Activated CD4-positive, alpha-beta memory T cell treated with anti-CD3 and anti-CD28 coated beads for 36 hours (primary cell): ENCODE measurements at regions of chr7 and their contacts with region 1.

Region 1: DNA sequence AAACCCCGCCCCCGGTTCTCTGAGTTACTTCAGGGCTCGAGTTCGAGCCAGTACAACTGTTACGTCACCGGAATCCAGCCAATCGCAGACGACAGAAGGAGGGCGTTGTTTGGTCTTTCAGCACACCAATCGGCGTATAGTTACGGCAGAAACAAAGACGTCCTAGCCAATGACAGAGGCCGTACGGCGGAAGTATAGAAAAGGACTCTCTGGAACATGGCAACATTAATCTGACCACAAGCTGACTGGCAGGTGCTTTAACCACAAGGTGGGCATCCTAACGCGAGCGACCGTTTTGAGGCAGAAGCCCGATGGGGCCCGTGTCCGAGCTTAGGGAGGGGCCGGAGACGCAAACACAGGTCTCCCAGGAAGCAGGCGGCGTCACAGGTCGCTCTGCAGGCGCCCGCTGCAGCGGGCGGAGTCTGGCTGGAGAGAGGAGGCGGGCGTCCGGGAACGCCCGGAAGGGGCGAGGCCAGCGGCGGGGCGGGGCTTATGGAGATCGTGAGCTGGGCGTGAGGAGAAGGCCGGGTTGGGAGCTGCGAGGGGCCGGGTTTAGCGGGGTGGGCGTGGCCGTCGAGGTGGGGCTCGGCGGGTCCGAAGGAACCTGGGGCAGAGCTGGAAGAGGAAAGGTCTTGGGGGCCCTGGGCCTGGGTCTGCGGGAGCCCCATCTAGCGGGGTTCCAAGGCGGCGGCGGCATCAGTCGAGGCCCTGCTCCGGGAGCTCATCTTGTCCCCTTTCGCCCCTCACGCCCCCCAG is at the start of gene MOSPD3:
- DNase-seq: peak; percentile 98
- H3K4me3 Mint-ChIP-seq: peak within 1 kb of the TSS; percentile 90
- H3K27ac Mint-ChIP-seq: peak within 1 kb of the TSS; percentile 98
- H3K4me1 Mint-ChIP-seq: peaks cover 14% of the 10 kb centered on the region
- H3K27me3 Mint-ChIP-seq: no peaks in the 10 kb centered on the region
- total RNA-seq, gene MOSPD3: 14.0 to 14.4 TPM

Region 2: DNA sequence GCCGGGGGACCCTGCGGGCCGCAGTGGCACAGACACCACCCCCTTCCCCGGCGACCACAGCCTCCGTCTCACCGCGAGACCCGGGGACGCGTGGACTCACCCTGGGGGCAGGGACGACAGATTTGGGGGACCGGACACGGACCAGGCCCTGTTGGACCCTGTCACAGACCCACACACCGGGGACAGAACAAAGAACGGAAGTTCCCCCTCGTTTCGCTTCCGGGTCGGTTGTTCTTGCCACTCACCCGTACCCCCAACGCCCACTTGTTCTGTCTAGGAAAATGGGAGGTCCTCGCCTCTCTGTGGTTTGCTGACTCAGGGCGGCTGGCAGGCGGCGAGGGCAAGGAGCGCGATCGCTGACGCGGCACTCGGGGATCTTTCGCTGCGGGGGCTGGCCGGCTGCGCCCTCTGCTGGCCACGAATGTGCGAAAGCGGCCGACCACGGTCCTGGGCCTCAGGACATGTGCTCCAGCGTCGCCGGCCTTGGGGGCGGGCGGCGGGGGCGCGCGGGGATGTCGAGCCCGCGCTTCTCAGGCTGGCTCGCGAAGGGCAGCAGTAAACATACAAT is 530.5 kb before region 1 on chr7 and contains the start of gene ZNF3:
- CTCF ChIA-PET with region 1: no interaction called
- POLR2A ChIA-PET with region 1: no interaction called
- intact Hi-C with region 1: no loop called
- DNase-seq: peak; percentile 99
- H3K4me3 Mint-ChIP-seq: peak within 1 kb of the TSS; percentile 83
- H3K27ac Mint-ChIP-seq: peak within 1 kb of the TSS; percentile 85
- H3K4me1 Mint-ChIP-seq: peaks cover 29% of the 10 kb centered on the region
- H3K27me3 Mint-ChIP-seq: no peaks in the 10 kb centered on the region
- total RNA-seq, gene ZNF3: 18.0 to 18.6 TPM

Region 3: DNA sequence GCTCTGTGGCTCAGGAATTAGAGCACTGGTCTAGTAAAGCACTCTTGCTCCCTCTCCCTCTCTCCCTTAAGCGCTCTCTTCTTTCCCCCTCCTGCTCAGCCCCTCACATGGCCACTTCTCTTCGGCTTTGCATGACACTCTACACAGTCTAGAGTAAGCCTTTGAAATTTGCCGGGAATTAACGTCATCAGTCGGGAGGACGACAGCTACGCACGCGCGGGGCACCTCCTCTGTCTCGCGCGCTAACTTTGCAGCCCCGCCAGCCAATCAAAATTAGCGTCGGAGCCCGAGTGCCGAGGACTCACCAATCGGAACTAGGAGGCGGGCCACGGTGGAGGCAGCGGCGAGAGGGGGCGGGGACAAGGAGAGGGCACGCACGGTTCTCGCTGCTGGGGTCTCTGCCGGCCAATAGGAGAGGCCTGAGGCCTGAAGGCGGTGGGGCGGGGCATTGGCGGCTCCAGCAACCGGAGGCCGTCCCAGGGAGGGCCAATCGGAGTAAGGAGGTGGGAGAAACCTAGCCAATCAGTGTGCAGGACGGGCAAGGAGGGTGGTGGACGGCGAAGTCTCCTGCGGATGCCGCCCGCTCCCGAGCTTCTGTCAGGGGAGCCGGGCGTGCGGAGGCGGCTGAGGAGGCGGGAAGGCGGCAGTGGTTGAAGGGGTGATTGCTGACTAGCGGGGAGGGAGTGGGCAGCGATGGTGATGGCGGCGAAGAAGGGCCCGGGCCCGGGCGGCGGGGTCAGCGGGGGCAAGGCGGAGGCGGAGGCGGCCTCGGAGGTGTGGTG is 73.3 kb before region 1 on chr7 and contains the start of gene AGFG2:
- CTCF ChIA-PET with region 1: no interaction called
- POLR2A ChIA-PET with region 1: no interaction called
- intact Hi-C with region 1: loop called (anchors 2 kb)
- DNase-seq: peak; percentile 100
- H3K4me3 Mint-ChIP-seq: peak within 1 kb of the TSS; percentile 95
- H3K27ac Mint-ChIP-seq: peak within 1 kb of the TSS; percentile 90
- H3K4me1 Mint-ChIP-seq: peaks cover 41% of the 10 kb centered on the region
- H3K27me3 Mint-ChIP-seq: no peaks in the 10 kb centered on the region
- total RNA-seq, gene AGFG2: 60.9 to 62.5 TPM

Region 4: DNA sequence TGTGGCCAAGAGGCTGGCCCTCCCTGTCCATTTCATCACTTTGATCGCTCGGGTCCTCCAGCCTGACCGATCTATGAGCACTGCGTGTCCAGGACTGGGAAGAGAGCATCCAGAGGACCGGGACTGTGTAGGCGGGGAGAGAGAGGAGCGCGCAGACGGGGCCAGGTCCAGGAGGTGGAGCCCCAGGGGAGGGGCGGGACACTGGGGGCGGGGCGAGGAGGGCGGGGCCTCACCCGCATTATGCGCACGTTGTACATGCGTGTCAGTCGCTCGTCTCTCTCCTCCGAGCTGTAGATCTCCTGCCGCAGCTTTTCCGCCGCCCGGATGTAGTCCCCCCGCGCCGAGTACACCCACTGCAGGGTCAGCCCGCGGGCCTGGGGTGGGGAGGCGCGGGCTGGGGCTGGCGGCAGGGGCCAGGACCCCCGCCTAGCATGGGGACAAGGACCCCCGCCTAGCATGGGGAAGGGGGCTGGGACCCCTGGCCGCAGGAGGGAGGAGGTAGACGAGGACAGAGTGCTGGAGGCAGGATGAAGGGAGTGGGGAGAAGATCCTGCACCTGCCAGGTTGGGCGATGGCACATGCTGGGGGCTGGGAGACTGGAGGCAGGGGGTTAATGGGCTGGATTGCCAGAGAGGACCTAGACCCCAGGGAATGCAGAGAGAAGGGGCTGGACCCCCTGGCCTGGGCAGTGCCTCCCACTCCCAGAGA is 14.5 kb after region 1 on chr7:
- CTCF ChIA-PET with region 1: interaction called, 11 read pairs
- POLR2A ChIA-PET with region 1: interaction called, 7 read pairs
- intact Hi-C with region 1: loop called (anchors 1 kb)
- DNase-seq: peak; percentile 96
- H3K4me3 Mint-ChIP-seq: peak overlapping the region; percentile 65
- H3K27ac Mint-ChIP-seq: peak overlapping the region; percentile 38
- H3K4me1 Mint-ChIP-seq: peaks cover 12% of the 10 kb centered on the region
- H3K27me3 Mint-ChIP-seq: no peaks in the 10 kb centered on the region

Region 5: DNA sequence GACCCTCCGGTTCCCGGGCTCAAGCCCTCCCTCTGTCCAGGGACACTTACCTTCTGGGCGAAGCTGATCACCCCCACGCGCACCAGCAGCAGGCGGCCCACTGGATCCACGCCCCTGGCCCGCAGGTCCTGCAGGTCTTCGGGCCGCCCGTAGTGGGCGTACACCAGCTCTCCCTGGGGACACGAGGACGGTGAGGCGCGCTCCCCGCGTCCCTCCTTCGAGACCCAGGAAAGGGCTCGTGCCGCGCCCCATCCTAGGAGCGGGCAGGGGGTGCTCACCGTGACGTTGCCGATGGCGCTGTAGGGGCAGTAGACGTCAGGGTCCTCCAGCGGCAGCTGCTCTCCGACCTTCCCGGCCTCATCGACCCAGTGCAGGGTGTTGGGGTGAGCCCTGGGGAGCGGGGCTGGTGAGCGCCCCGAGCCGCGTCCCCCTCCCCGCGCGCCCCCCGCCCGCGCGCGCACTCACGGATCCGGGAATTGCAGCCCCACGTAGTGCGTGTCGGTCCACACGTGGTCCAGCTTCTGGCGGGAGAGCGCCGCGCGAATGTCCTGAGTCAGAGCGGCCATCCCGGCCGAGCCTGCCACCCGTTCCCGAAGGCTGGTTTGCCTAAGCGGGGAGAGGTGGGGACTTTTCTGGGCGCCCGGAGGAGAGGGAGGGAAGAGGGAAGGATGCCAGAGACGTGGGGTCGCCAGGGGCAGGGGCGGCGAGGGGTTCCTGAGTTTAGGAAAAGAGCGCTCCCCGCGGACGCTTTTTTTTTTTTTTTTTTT is 21.0 kb after region 1 on chr7:
- CTCF ChIA-PET with region 1: interaction called, 33 read pairs
- POLR2A ChIA-PET with region 1: interaction called, 4 read pairs
- intact Hi-C with region 1: no loop called
- DNase-seq: peak; percentile 78
- H3K4me3 Mint-ChIP-seq: peak overlapping the region; percentile 77
- H3K27ac Mint-ChIP-seq: peak overlapping the region; percentile 82
- H3K4me1 Mint-ChIP-seq: peaks cover 12% of the 10 kb centered on the region
- H3K27me3 Mint-ChIP-seq: peaks cover 3% of the 10 kb centered on the region

Region 6: DNA sequence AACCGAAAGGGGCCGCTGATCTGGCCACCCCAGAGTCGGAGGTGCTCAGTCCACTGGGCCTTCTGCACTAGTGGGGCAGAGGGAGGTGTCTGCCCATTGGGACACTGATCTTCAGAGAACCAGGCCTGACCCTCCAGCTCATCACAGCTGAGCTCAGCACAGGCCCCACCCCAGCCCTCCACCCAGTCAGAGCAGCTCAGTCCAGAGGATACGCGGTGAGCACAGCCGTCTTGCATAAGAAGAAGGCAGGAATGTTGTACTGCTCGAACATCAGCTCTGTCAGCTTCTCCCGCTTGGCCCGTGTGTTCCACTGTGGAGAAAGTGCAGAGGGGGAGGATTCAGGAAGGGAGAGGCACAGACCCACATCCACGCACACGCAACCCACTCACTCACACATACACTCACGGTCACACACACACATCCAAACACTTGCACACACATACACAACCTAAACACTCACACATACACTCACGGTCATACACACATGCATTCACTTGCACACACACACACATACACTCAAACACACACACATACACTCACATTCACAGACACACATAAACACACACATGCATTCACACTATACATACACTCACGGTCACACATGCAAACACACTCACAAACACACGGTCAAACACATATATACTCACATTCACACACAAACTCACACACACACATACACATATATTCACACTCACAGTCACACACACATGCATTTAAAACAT is 37.8 kb after region 1 on chr7:
- CTCF ChIA-PET with region 1: no interaction called
- POLR2A ChIA-PET with region 1: no interaction called
- intact Hi-C with region 1: no loop called
- DNase-seq: no peak
- H3K4me3 Mint-ChIP-seq: no peak overlapping the region
- H3K27ac Mint-ChIP-seq: no peak overlapping the region
- H3K4me1 Mint-ChIP-seq: no peaks in the 10 kb centered on the region
- H3K27me3 Mint-ChIP-seq: peaks cover 22% of the 10 kb centered on the region

Region 7: DNA sequence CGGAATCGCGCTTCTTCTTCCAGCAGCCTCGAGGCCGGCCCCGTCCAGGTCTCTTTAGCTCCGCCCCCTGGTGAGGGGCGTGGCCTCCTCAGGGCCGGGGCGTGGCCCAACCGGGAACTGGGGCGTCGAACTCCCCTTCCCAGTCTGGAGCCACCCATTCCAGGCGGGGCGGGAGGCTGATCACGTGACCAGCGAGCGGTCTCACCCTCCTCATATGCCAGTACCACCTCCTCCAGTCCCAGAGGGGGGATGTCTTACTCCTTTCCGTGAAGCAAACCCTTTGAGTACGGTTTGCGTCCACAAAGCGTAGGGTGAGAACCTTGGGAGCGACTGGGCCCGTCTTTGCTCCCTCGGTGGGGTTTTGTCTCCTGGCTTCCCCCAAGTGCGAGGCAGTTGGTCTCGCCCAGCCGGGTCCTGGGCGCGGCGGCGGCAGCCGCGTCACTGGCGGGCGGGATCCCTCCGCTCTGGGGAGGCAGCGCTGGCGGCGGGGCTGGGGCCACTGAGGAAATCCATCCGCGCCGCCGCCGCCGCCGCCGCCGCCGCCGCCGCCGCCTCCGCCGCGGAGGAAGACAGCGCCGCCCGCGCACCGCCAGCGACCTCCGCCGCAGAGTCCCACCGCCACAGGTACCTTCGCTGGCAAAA is 61.3 kb after region 1 on chr7 and contains the start of gene GNB2:
- CTCF ChIA-PET with region 1: no interaction called
- POLR2A ChIA-PET with region 1: interaction called, 7 read pairs
- intact Hi-C with region 1: loop called (anchors 1 kb)
- DNase-seq: peak; percentile 100
- H3K4me3 Mint-ChIP-seq: peak within 1 kb of the TSS; percentile 95
- H3K27ac Mint-ChIP-seq: peak within 1 kb of the TSS; percentile 97
- H3K4me1 Mint-ChIP-seq: peaks cover 8% of the 10 kb centered on the region
- H3K27me3 Mint-ChIP-seq: no peaks in the 10 kb centered on the region
- total RNA-seq, gene GNB2: 228 to 231 TPM

Region 8: DNA sequence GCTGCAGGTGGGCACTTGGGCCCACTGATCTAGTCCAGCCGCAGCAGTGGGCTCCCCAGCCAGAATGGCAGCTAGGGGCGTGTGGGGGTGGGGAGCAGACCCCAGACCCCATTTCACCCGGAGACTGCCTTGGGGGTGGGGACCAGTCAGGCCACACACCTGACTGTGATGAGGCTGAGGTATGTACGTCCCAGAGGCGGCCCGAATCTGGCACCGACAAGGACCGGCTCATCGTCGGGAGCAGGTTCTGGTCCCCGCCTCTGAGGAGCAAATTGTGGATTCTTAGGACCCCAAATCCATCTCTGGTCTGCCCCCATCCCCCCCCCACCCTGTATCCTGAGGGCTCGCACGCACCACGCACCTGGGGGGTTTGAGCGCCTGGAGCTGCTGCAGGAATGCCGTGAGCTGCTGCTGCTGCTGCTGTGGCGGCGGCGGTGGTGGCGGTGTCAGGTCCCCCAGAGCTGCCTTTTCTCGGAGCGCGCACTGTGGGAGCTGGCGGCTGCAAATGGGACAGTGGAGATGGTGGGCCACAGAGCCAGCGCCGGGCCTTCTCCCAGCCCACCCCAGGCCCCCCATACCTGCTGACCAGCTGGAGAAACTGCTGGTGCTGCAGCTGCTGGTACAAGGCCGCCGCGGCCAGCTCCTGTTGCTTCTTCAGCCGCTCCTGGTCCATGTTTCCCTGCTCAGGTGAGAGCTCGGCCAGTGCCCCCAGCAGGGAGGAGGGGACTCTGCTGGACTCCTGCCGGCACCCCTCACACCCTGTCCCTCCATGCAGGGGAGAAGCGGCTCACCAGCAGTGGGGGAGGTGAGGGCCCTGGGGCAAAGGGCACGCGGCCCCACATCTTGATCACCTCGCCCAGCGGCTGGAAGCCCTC is 71.7 kb after region 1 on chr7:
- CTCF ChIA-PET with region 1: no interaction called
- POLR2A ChIA-PET with region 1: no interaction called
- intact Hi-C with region 1: no loop called
- DNase-seq: no peak
- H3K4me3 Mint-ChIP-seq: no peak overlapping the region
- H3K27ac Mint-ChIP-seq: no peak overlapping the region
- H3K4me1 Mint-ChIP-seq: peaks cover 20% of the 10 kb centered on the region
- H3K27me3 Mint-ChIP-seq: no peaks in the 10 kb centered on the region